IMR-90 (cell line): ENCODE measurements at regions of chr20 and their contacts with region 1.

Region 1: DNA sequence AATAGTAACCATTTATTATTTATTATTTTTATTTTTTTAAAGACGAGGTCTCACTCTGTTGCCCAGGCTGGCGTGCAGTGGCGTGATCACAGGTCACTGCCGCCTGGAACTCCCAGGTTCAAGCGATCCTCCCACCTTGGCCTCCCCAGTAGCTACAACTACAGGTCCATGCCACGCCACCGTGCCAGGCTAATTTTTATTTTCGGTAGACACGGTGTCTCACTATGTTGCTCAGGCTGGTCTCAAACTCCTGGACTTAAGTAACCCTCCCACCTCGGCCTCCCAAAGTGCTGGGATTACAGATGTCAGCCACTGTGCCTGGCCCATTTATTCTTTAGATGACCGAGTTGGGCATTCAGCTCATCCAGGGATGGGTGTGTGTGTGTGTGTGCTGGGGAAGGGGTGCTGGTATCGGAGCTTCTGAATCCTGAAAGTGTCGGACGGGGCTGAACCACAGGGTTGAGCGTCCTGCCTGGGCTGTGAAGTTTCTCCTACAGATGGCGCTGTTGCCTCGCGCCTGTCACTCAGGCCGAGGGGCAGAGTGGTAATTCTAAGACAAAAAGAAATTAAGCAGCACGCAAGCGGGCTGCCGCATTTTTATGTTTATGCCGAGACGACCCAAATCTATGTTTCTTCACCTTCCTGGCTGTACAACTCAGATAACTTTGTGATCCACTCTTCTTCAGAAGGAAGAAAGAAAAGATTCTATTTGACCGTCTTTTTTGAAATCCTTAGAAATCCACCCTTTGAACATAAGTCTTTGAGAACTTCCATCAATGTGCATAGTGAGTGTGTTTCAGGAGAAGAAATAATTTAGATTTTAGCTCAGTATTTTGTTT is 252.8 kb downstream of the CDH26 start:
- DNase-seq: peak; percentile 60
- ATAC-seq: peak; percentile 96
- H3K4me3 ChIP-seq: no peak overlapping the region
- H3K27ac ChIP-seq: no peak overlapping the region
- H3K4me1 ChIP-seq: no peaks in the 10 kb centered on the region
- H3K27me3 ChIP-seq: 0 out of 2 replicates have a peak, but pooled peaks cover 4% of the 10 kb centered on the region
- CTCF ChIP-seq: peak; percentile 97
- POLR2A ChIP-seq: peak; percentile 57
- RAD21 ChIP-seq: peak; percentile 99

Region 2: GRCh38 chr20:59948828-59949720 is 261.9 kb before region 1 on chr20:
- CTCF ChIA-PET with region 1: interaction called, 4 read pairs
- POLR2A ChIA-PET with region 1: no interaction called
- dilution Hi-C with region 1: no loop called
- in situ Hi-C with region 1: no loop called
- intact Hi-C with region 1: loop called (anchors 2 kb)
- DNase-seq: peak; percentile 67
- ATAC-seq: peak; percentile 67
- H3K4me3 ChIP-seq: no peak overlapping the region
- H3K27ac ChIP-seq: no peak overlapping the region
- H3K4me1 ChIP-seq: peaks cover 2% of the 10 kb centered on the region
- H3K27me3 ChIP-seq: no peaks in the 10 kb centered on the region
- CTCF ChIP-seq: peak; percentile 77
- POLR2A ChIP-seq: no peak
- RAD21 ChIP-seq: peak; percentile 72

Region 3: GRCh38 chr20:60262967-60263603 is 52.1 kb after region 1 on chr20:
- CTCF ChIA-PET with region 1: interaction called, 14 read pairs
- POLR2A ChIA-PET with region 1: no interaction called
- dilution Hi-C with region 1: no loop called
- in situ Hi-C with region 1: no loop called
- intact Hi-C with region 1: loop called (anchors 2 kb)
- DNase-seq: no peak
- ATAC-seq: no peak
- H3K4me3 ChIP-seq: no peak overlapping the region
- H3K27ac ChIP-seq: no peak overlapping the region
- H3K4me1 ChIP-seq: no peaks in the 10 kb centered on the region
- H3K27me3 ChIP-seq: peaks cover 7% of the 10 kb centered on the region; the same call in 1 of the 2 replicates
- CTCF ChIP-seq: peak; percentile 53
- POLR2A ChIP-seq: no peak
- RAD21 ChIP-seq: peak; percentile 52

Region 4: DNA sequence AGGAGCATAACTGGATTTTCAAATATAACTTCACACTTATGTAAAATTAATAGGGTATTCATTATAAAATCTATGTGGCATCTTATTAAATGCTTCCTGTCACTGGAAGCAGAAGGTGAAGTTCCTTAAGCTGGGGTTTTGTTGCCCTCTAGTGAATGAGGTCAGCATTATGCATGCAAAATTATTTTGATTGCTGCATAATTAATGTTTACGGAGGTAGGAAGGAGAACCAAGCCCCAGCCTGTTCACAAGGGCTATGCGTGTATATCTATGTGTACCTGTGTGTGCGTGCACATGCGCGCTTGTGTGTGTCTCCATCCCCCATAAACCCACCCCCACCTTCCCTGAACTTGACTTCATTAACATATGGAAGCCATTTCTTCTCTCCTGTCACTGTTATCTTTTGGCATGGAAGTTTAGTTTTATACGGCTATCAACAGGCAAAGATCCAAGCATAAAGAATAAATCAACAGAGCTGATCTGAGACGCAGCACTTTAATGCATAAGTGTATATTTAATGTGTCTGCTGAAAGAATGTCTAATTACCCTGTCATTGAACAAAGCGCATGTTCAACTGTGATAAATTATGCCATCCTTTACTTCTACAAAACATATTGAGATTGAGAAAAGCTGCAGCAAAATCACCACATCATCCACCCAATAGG is 950.9 kb after region 1 on chr20:
- CTCF ChIA-PET with region 1: interaction called, 3 read pairs
- POLR2A ChIA-PET with region 1: no interaction called
- dilution Hi-C with region 1: no loop called
- in situ Hi-C with region 1: no loop called
- intact Hi-C with region 1: loop called (anchors 1 kb)
- DNase-seq: no peak
- ATAC-seq: no peak
- H3K4me3 ChIP-seq: no peak overlapping the region
- H3K27ac ChIP-seq: no peak overlapping the region
- H3K4me1 ChIP-seq: peaks cover 1% of the 10 kb centered on the region; the same call in 1 of the 2 replicates
- H3K27me3 ChIP-seq: peaks cover 12% of the 10 kb centered on the region
- CTCF ChIP-seq: peak; percentile 32
- POLR2A ChIP-seq: no peak
- RAD21 ChIP-seq: peak; percentile 47

Region 5: GRCh38 chr20:61234803-61235113 is 1023.8 kb after region 1 on chr20:
- CTCF ChIA-PET with region 1: no interaction called
- POLR2A ChIA-PET with region 1: no interaction called
- dilution Hi-C with region 1: no loop called
- in situ Hi-C with region 1: loop called (anchors 10 kb)
- intact Hi-C with region 1: loop called (anchors 1 kb)
- DNase-seq: no peak
- ATAC-seq: no peak
- H3K4me3 ChIP-seq: no peak overlapping the region
- H3K27ac ChIP-seq: no peak overlapping the region
- H3K4me1 ChIP-seq: no peaks in the 10 kb centered on the region
- H3K27me3 ChIP-seq: peaks cover 10% of the 10 kb centered on the region
- CTCF ChIP-seq: no peak
- POLR2A ChIP-seq: no peak
- RAD21 ChIP-seq: no peak

Region 6: DNA sequence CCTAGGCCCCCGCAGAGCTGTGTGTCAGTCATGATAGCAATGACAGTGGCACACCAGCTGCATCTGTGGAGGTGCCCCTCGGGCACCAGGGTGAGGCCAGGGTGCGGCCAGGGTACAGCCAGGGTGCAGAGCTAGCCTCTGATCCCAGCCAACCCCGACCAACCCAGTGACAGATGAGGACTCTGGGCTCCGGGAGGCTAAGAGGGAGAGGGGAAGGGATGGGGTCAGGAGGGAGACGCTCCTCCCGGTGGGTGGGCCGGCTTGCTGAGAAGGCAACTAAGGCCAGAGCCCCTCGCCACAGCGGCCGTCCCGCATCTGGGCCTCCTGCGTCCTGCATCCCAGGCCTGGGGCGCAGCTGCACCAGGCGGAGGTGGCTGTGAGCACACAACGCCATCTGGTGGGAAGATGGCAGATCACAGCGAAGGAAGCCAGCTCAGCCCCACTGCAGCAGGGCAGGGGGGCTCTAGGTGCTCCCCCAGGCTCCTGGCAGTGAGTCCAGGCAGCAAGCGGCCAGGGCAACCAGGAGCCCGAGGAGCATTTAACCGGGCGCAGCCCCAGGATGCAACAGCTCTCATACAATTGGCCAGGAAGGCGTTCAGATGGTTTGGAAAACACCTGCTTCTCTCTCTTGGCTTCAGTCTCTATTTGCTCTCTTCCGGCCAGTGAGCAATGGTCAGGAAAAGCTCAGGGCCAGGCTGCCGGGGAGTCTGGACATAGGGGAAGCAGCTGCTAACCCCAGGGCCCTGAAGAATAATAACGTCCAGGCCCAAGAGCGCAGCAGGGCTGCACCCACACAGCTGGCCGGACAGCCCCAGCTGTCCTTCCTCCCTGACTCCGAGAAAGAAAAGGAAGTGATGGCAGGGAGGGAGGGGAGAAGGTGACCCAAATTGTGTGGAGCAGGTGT is 1685.3 kb after region 1 on chr20:
- CTCF ChIA-PET with region 1: no interaction called
- POLR2A ChIA-PET with region 1: no interaction called
- dilution Hi-C with region 1: no loop called
- in situ Hi-C with region 1: loop called (anchors 10 kb)
- intact Hi-C with region 1: loop called (anchors 5 kb)
- DNase-seq: peak; percentile 28
- ATAC-seq: peak; percentile 98
- H3K4me3 ChIP-seq: no peak overlapping the region
- H3K27ac ChIP-seq: no peak overlapping the region
- H3K4me1 ChIP-seq: no peaks in the 10 kb centered on the region
- H3K27me3 ChIP-seq: peaks cover 3% of the 10 kb centered on the region; the same call in 1 of the 2 replicates
- CTCF ChIP-seq: peak; percentile 79
- POLR2A ChIP-seq: no peak
- RAD21 ChIP-seq: peak; percentile 85